H1 (cell line): ENCODE measurements at regions of chr13 and their contacts with region 1.

Region 1: GRCh38 chr13:97911311-97912128 is 42.0 kb upstream of the IPO5 start:
- DNase-seq: peak in 1 of 2 experiments; percentile 54
- H3K4me3 ChIP-seq: no peak overlapping the region
- H3K27ac ChIP-seq: no peak overlapping the region
- H3K4me1 ChIP-seq: no peaks in the 10 kb centered on the region
- H3K27me3 ChIP-seq: no peaks in the 10 kb centered on the region
- CTCF ChIP-seq: peak; percentile 58 to 84 (median 68)
- EP300 ChIP-seq: no peak
- POLR2A ChIP-seq: no peak
- RAD21 ChIP-seq: peak; percentile 71 to 72

Region 2: DNA sequence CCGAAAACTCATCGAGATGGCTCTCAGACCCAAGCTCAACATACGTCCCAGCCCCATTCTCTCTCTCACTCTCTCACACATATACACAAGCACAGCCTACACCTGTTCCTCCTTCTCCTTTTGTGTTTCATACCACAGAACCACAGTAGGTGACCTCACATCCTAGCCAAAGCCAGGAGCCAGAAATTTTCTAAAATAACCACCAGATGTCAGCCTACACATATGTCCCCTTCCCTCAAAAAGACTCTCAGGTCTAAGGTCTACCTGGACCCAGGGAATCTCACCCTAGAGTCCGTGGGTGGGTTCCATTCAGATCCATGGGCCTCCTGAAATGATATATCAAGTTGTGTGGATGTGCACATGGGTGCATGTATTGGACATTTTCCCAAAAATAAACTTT is 62.2 kb before region 1 on chr13:
- CTCF ChIA-PET with region 1: interaction called, 82 read pairs
- POLR2A ChIA-PET with region 1: no interaction called
- DNase-seq: no peak
- H3K4me3 ChIP-seq: no peak overlapping the region
- H3K27ac ChIP-seq: no peak overlapping the region
- H3K4me1 ChIP-seq: no peaks in the 10 kb centered on the region
- H3K27me3 ChIP-seq: no peaks in the 10 kb centered on the region
- CTCF ChIP-seq: peak in 2 of 3 experiments; percentile 56 to 60; a peak in 3 of 4 replicates
- EP300 ChIP-seq: no peak
- POLR2A ChIP-seq: no peak
- RAD21 ChIP-seq: peak; percentile 75 to 76

Region 3: DNA sequence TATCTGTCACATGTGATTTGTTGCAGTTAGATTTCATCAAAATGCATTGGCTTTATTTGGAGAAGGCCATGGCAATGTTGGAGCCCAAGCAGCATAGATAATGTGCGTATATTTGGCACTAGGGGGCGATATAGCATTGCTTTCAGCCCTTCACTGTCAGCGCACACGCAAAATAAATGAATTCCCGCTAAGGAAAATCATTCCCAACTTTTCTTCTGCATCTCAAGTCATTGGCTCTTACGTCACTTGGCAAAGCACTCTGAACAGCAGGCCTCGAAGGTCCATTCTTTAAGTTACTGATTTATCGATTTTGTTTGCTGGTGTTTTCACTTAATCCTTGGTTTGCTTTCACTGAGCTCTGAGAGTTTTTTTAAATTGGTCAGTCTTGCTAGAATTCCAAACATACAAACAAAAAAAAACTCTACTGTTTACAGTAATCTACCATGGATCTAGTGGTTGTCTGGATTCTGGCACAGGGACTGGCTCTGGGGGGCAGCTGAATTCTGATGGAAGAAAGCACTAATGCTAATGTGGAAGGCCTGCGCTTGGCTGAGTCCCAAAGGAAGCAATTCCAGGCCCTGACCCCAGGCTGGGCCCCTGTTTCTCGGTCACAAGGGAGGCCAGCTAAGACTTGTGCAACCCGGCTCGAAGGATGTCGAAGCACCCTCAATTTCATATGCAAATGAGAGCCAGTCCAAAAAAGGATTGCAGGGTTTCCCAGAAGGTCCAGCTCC is 55.8 kb before region 1 on chr13:
- CTCF ChIA-PET with region 1: interaction called, 82 read pairs
- POLR2A ChIA-PET with region 1: no interaction called
- DNase-seq: no peak
- H3K4me3 ChIP-seq: no peak overlapping the region
- H3K27ac ChIP-seq: no peak overlapping the region
- H3K4me1 ChIP-seq: peaks cover 0 to 2% (median 0%) of the 10 kb centered on the region in 4 experiments; a peak in 2 of 7 replicates
- H3K27me3 ChIP-seq: no peaks in the 10 kb centered on the region
- CTCF ChIP-seq: peak; percentile 38 to 82 (median 81)
- EP300 ChIP-seq: no peak
- POLR2A ChIP-seq: no peak
- RAD21 ChIP-seq: peak; percentile 93 to 94

Region 4: DNA sequence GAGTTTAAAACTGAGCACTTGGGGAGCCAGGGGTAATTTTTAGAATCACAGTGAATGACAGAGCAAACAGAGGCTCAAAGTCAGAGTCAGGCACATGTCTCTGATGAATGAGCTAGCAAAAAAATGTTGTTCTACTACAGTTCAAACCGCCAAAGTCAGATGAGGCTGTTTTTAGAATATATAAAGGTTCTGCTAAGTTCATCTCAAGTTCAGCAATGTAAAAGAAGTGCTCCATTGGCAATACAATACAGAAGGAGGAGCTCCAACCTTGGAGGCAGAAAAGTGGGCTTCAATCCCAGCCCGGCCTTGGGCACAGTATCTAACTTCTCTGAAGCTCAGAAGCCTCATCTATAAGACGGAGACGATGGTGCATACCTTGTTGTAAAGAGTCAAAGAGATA is 28.1 kb before region 1 on chr13:
- CTCF ChIA-PET with region 1: interaction called, 27 read pairs
- POLR2A ChIA-PET with region 1: no interaction called
- DNase-seq: no peak
- H3K4me3 ChIP-seq: no peak overlapping the region
- H3K27ac ChIP-seq: no peak overlapping the region
- H3K4me1 ChIP-seq: peaks cover 0 to 6% (median 3%) of the 10 kb centered on the region in 4 experiments; a peak in 4 of 7 replicates
- H3K27me3 ChIP-seq: peaks cover 0 to 1% (median 0%) of the 10 kb centered on the region in 4 experiments; a peak in 1 of 7 replicates
- CTCF ChIP-seq: no peak
- EP300 ChIP-seq: no peak
- POLR2A ChIP-seq: no peak
- RAD21 ChIP-seq: no peak

Region 5: GRCh38 chr13:97934590-97934989 is 23.1 kb after region 1 on chr13:
- CTCF ChIA-PET with region 1: interaction called, 16 read pairs
- POLR2A ChIA-PET with region 1: no interaction called
- DNase-seq: no peak
- H3K4me3 ChIP-seq: no peak overlapping the region
- H3K27ac ChIP-seq: no peak overlapping the region
- H3K4me1 ChIP-seq: peaks cover 0 to 3% (median under 1%) of the 10 kb centered on the region in 4 experiments; a peak in 2 of 7 replicates
- H3K27me3 ChIP-seq: no peaks in the 10 kb centered on the region
- CTCF ChIP-seq: no peak
- EP300 ChIP-seq: no peak
- POLR2A ChIP-seq: no peak
- RAD21 ChIP-seq: no peak

Region 6: DNA sequence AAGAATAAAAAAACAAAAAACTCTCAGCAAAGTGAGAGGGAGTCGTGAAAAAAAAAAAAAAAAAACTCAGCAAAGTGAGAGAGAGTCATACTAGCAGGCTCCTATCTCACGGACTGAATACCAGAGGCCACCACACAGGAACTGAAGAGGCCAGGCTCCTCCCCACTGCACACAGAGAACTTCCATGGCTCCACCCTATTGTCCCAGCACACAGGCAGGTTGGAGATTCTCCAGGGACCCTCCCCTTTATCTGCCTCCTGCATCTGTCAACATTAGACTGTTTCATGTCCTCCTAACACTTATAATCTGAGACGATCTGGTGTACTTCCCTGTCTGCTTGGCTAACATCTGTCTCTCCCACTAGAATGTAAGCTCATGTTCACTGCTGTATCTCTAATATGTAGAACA is 194.4 kb after region 1 on chr13:
- CTCF ChIA-PET with region 1: no interaction called
- POLR2A ChIA-PET with region 1: no interaction called
- DNase-seq: no peak
- H3K4me3 ChIP-seq: no peak overlapping the region
- H3K27ac ChIP-seq: no peak overlapping the region
- H3K4me1 ChIP-seq: peaks cover 0 to 11% (median 4%) of the 10 kb centered on the region in 4 experiments; a peak in 4 of 7 replicates
- H3K27me3 ChIP-seq: no peaks in the 10 kb centered on the region
- CTCF ChIP-seq: no peak
- EP300 ChIP-seq: no peak
- POLR2A ChIP-seq: no peak
- RAD21 ChIP-seq: no peak